Natural killer cell (primary cell): ENCODE measurements at regions of chr15 and their contacts with region 1.

Region 1: DNA sequence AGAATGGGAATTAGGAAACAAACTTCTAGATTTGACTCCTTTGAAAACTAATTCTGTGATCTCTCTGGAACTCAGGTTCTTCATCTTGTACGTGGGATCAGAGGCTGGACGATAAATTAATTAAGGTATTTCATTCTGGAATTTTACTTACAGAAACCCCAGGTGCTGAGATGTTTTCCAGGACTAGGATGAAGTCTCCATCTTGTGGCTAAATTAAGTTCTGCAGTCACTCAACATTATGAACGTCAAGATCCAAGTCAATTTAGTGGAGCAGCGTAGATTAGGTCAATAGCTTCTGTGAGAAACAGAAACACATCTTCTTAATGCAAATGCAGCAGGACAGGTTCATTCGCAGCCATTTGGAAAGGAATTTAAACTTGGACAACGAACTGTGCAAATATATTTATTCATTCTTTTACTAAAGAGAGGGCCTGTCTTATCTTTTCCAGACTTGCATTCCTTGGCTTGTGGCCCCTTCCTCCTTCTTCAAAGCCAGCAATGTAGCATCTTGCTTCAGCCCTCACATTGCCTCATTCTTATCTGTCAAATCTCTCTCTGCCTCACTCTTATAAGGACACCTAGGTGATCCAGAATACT is 26.7 kb upstream of the TMC3 start:
- DNase-seq: peak in 1 of 2 donors; percentile 78
- ATAC-seq: peak in 1 of 3 donors; percentile 61
- H3K4me3 ChIP-seq: no peak overlapping the region
- H3K4me3 Mint-ChIP-seq: no peak overlapping the region
- H3K27ac ChIP-seq: no peak overlapping the region
- H3K27ac Mint-ChIP-seq: no peak overlapping the region
- H3K4me1 ChIP-seq: no peaks in the 10 kb centered on the region
- H3K4me1 Mint-ChIP-seq: no peaks in the 10 kb centered on the region
- H3K27me3 ChIP-seq: no peaks in the 10 kb centered on the region
- H3K27me3 Mint-ChIP-seq: peaks cover 0 to 6% of the 10 kb centered on the region in 2 donors
- CTCF ChIP-seq: peak; percentile 70

Region 2: DNA sequence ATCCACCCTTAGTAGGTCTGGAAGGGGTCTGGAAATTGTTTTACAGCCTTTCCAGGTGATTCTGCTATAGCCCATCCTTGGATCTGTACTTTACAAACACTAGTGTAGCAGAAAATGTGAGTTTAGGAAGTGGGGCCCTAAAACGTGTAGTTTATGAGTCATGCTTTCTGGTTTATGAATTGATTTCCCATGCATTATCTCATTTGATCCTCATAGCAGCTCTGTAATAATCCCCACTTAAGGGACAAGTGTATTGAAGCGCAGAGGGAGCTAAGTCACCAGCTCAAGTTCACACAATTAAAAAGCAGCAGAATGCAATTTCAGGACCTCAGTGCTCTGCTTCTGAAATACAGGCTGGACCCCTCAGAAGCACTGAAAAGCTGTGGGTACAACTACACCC is 54.1 kb before region 1 on chr15:
- intact Hi-C with region 1: loop called (anchors 10 kb)
- DNase-seq: no peak
- ATAC-seq: no peak
- H3K4me3 ChIP-seq: no peak overlapping the region
- H3K4me3 Mint-ChIP-seq: no peak overlapping the region
- H3K27ac ChIP-seq: no peak overlapping the region
- H3K27ac Mint-ChIP-seq: no peak overlapping the region
- H3K4me1 ChIP-seq: no peaks in the 10 kb centered on the region
- H3K4me1 Mint-ChIP-seq: peaks cover 5% of the 10 kb centered on the region in 2 donors
- H3K27me3 ChIP-seq: no peaks in the 10 kb centered on the region
- H3K27me3 Mint-ChIP-seq: peaks cover 0 to 10% of the 10 kb centered on the region in 2 donors
- CTCF ChIP-seq: no peak